GM13976 (cell line): ENCODE measurements at regions of chr22 and their contacts with region 1.

Region 1: GRCh38 chr22:46013460-46014416 is 36.8 kb upstream of the WNT7B start:
- DNase-seq: peak; percentile 94
- CTCF ChIP-seq: peak; percentile 70

Region 2: GRCh38 chr22:46099740-46100139 is 86.0 kb after region 1 on chr22:
- in situ Hi-C with region 1: no loop called
- DNase-seq: no peak
- CTCF ChIP-seq: no peak

Region 3: DNA sequence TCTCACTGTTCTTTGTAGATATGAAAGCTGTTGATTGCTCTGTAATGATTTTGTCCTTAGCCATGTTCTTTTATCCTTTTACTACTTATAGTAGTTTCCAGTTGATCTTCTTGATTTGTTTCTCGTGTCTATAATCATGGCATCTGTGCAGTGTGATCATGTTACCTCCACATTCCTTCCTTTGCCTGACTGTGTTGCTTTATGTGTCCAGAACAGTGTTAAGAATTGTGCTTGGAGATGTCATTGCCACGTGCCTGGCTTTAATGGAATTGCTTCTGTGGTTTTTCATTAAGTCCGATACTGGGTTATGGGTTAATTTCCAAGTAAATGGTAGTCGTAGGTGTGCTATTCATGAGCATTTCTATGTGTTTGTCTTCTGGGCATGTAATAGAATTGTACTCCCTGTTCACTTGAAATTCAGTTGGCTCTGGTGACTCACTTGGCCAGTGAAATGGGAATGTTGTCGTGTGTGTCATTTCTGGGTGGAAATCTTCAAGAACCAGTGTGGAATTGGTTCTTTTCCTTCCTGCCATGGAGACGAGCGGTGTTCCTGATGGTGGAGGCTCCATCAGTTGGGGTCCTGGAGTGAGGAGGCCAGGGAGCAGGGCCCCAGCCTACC is 289.7 kb after region 1 on chr22:
- in situ Hi-C with region 1: loop called (anchors 25 kb)
- DNase-seq: no peak
- CTCF ChIP-seq: no peak